ENCODE measurements at regions of chr2 and their contacts with region 1.

Region 1: DNA sequence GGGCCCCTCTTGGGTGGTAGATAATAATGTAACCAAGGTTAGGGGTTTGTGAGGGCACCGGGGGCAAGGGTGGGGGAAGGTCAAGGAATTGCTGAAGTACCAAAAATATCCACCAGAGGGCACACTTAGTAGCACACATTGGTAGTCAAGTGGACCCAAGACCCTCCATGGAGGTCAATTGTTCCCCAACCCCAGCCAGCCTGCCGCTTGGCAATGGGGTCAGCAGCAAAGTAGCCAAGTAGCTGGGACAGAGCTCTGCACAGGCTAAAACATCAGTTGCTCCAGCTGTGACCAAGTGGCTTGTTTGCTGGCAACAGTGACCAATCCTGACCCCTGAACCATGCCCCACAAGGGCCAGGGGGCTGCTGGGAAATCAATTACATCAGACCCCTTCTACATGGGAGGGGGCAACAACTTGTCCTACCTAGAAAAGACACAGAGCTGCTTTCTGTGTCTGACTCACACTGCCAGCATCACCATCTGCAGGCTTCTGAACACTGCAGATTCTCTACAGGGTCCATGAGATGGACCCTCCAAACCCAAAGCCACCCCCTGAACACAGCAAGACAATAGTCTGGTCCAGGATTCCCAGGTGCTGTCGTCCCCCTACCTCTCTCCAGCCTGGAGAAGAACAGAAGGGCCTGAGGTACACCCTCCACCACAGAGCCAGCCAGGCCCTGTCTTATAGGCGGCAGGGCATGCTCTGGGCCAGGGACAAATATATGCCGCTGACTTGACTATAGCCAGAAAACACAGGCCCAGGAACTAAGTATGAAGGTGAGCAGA is 76.0 kb downstream of the EMX1 start:
- DNase-seq: peak; percentile 63
- H3K4me3 Mint-ChIP-seq: no peak overlapping the region
- H3K27ac Mint-ChIP-seq: no peak overlapping the region
- H3K4me1 Mint-ChIP-seq: no peaks in the 10 kb centered on the region
- H3K27me3 Mint-ChIP-seq: no peaks in the 10 kb centered on the region
- CTCF ChIP-seq: peak; percentile 83

Region 2: DNA sequence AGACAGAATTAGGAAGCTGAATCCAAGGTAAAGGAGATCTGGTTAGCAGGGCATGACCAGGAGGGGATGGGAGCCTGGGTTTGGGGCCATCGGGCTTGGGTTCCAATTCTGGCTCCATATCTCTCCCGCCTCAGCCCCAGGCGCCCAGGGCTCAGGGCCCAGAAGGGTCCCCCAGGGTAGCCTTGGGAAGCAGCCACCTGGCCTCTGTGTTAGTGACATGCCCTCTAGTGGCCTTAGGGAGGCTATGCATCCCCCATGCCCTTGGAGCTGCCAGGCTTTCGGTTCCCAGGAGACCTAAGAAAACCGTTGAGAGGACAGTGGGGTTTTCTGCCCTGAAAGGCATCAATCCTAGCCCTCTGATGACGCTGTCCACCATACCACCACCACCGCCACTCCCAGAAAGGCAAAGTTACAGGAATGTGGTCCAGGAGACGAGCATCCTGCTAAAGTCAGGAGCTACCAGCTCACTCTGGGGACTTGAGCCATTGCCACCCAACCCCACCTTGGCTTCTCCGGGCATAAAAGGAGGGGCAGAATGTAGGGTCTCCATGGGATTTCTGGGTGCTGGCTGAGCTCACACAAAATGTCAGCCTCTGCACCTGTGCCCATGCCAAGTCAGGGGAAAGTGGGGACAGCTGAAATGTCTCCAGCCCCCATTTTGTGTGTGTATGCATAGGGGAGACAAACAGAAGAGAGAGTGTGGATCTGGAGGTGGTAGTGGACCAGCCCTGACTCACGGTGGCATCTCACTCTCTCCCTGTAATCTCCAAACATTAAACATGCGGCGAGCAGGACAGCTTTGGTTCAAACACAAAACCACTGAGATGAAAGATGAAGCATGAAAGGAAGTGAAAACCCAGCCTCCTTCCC is 19.5 kb before region 1 on chr2:
- CTCF ChIA-PET with region 1: interaction called, 11 read pairs
- POLR2A ChIA-PET with region 1: no interaction called
- intact Hi-C with region 1: no loop called
- DNase-seq: peak; percentile 64
- H3K4me3 Mint-ChIP-seq: no peak overlapping the region
- H3K27ac Mint-ChIP-seq: no peak overlapping the region
- H3K4me1 Mint-ChIP-seq: no peaks in the 10 kb centered on the region
- H3K27me3 Mint-ChIP-seq: no peaks in the 10 kb centered on the region
- CTCF ChIP-seq: peak; percentile 85

Region 3: DNA sequence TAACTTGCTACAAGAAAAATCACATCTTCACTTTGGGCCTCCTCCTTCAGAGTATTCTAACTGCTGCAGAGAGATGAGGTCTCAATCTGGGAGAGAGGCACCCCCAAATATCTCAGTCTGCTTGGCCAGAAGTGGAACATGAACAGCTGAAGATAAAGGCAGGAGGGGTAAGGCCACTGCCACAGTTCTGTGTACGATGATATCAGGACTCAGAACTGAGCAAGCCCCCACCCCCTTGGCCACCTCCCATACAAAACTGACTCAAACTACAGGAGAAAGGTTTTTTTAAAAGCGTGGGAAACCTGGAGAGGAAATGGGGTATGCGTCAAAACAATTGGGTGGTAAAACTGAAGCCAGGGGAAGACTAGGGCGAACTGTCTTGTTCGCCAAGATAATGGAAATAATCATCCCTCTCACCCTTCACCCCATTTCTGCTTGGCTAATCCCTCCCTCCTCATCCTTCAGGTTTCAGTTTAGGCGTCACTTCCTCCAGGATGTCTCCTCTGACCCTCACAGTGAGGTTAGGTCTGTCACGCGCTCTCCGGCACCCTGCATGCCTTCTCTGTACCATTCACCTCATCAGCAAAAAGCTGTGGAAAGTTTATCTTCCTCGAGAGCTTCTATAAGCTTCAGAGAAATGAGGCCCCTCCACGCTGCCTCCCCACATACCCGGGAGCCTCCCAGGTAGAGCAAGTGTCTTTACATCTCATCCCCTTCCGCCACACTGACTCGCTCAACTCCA is 13.8 kb after region 1 on chr2:
- CTCF ChIA-PET with region 1: interaction called, 17 read pairs
- POLR2A ChIA-PET with region 1: no interaction called
- intact Hi-C with region 1: no loop called
- DNase-seq: no peak
- H3K4me3 Mint-ChIP-seq: no peak overlapping the region
- H3K27ac Mint-ChIP-seq: no peak overlapping the region
- H3K4me1 Mint-ChIP-seq: no peaks in the 10 kb centered on the region
- H3K27me3 Mint-ChIP-seq: no peaks in the 10 kb centered on the region
- CTCF ChIP-seq: no peak

Region 4: DNA sequence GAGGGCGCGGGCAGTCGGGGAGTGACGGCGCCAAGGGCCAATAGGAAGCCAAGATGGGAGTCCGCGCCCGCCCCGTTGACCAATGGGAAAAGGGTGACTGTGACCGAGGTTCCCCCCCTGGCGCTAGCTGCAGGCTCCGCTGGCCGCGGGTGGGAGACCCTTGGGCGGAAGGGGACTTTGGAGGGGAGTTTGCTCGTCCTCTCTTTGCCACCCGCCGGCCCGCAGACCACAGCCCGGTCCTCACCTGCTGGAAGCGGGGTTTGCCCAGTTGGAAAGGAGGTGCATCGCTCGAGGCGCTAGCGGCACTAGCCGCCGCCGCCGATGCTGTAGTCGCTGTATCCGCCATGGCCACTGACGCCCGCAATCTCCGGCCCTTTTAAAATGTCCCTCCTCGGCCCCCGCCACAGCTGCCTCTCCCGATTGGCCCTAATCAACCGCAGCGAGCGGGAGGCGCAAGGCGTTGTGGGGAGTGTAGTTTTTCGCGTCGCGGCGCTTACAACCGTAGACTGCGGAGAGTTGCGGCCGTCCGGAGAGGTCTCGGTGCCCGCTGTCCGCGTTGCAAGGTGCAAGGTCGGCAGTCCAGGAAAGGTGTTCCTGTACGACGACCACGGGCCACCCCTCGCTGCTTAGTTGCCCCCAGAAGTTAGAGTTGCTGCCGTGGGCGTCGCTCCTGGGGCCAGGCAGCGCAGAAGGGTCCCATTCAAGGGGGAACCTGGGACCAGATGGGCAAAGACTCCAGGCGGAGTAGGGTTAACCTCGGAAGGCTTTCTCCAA is 78.2 kb after region 1 on chr2 and contains the start of gene SFXN5:
- CTCF ChIA-PET with region 1: interaction called, 8 read pairs
- POLR2A ChIA-PET with region 1: no interaction called
- intact Hi-C with region 1: loop called (anchors 2 kb)
- DNase-seq: peak; percentile 97
- H3K4me3 Mint-ChIP-seq: peak within 1 kb of the TSS; percentile 88
- H3K27ac Mint-ChIP-seq: peak within 1 kb of the TSS; percentile 88
- H3K4me1 Mint-ChIP-seq: peaks cover 34% of the 10 kb centered on the region
- H3K27me3 Mint-ChIP-seq: no peaks in the 10 kb centered on the region
- CTCF ChIP-seq: no peak
- total RNA-seq, gene SFXN5: 6.0 and 8.0 TPM in 2 replicates

Region 5: GRCh38 chr2:73156539-73157124 is 163.3 kb after region 1 on chr2:
- CTCF ChIA-PET with region 1: interaction called, 15 read pairs
- POLR2A ChIA-PET with region 1: no interaction called
- intact Hi-C with region 1: no loop called
- DNase-seq: peak; percentile 51
- H3K4me3 Mint-ChIP-seq: no peak overlapping the region
- H3K27ac Mint-ChIP-seq: no peak overlapping the region
- H3K4me1 Mint-ChIP-seq: peaks cover 5% of the 10 kb centered on the region
- H3K27me3 Mint-ChIP-seq: peaks cover 28% of the 10 kb centered on the region
- CTCF ChIP-seq: peak; percentile 64

Region 6: GRCh38 chr2:73163483-73164367 is 170.4 kb after region 1 on chr2:
- CTCF ChIA-PET with region 1: interaction called, 24 read pairs
- POLR2A ChIA-PET with region 1: no interaction called
- intact Hi-C with region 1: loop called (anchors 1 kb)
- DNase-seq: peak; percentile 72
- H3K4me3 Mint-ChIP-seq: no peak overlapping the region
- H3K27ac Mint-ChIP-seq: no peak overlapping the region
- H3K4me1 Mint-ChIP-seq: no peaks in the 10 kb centered on the region
- H3K27me3 Mint-ChIP-seq: peaks cover under 1% of the 10 kb centered on the region
- CTCF ChIP-seq: peak; percentile 91

Region 7: DNA sequence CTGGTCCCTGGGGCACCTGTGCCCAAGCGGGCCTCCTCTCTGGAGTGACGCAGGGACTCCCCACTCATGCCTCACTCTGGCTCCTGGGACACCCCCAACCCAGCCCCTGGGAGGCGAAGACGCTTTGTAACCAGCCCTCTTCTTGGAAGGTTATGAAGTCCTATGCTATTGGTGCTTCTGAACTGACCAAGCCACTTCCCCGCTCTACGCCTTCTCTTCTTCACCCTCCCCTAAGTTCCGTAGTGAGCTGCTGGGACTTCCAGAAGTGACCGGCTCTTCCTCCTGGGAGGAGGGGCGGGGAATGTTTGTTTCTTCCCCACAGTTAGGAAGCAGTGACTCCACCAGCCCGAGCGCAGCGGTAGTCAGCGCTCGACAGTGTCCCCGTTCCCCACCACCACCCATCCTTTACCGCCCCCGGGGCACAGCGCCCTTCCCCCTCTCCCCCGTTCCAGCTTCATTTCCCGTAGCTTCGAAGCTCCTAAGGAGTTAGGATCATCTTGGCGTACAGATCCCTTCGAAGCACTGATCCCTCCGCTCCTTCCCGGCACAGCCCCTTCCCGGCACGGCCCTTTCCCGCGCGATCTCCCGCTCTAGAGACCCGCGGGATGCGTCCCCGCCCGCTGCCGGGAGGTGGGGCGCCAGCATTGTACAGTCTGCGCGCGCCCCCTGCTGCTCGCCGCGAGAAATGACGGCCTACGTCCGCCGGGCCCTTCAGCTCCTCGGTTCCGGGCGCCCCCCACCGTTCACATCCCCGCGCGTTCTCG is 183.7 kb after region 1 on chr2:
- CTCF ChIA-PET with region 1: interaction called, 43 read pairs
- POLR2A ChIA-PET with region 1: no interaction called
- intact Hi-C with region 1: loop called (anchors 1 kb)
- DNase-seq: peak; percentile 78
- H3K4me3 Mint-ChIP-seq: peak overlapping the region; percentile 86
- H3K27ac Mint-ChIP-seq: no peak overlapping the region
- H3K4me1 Mint-ChIP-seq: peaks cover 9% of the 10 kb centered on the region
- H3K27me3 Mint-ChIP-seq: peaks cover 48% of the 10 kb centered on the region
- CTCF ChIP-seq: peak; percentile 97